ENCODE measurements at regions of chr13 and their contacts with region 1.

Region 1: GRCh38 chr13:49996951-49997895 is at the start of gene TRIM13:
- DNase-seq: peak; percentile 53 to 89
- H3K4me3 ChIP-seq: peak within 1 kb of the TSS; percentile 89 to 95 (median 92)
- H3K27ac ChIP-seq: peak within 1 kb of the TSS; percentile 95
- H3K4me1 ChIP-seq: peaks cover 2 to 6% (median 5%) of the 10 kb centered on the region in 4 experiments; a peak in 4 of 7 replicates
- H3K27me3 ChIP-seq: peaks cover 0 to 2% (median 0%) of the 10 kb centered on the region in 4 experiments; a peak in 2 of 7 replicates
- CTCF ChIP-seq: peak; percentile 62 to 83 (median 65)
- EP300 ChIP-seq: no peak
- POLR2A ChIP-seq: peak; percentile 81 to 89
- RAD21 ChIP-seq: peak; percentile 48 to 67
- total RNA-seq, gene TRIM13: 31.5 and 34.9 TPM in 2 replicates

Region 2: GRCh38 chr13:49976314-49977258 is 20.6 kb before region 1 on chr13:
- CTCF ChIA-PET with region 1: interaction called, 72 read pairs
- POLR2A ChIA-PET with region 1: interaction called, 6 read pairs
- DNase-seq: peak in 1 of 2 experiments; percentile 75
- H3K4me3 ChIP-seq: no peak overlapping the region
- H3K27ac ChIP-seq: no peak overlapping the region
- H3K4me1 ChIP-seq: no peaks in the 10 kb centered on the region
- H3K27me3 ChIP-seq: no peaks in the 10 kb centered on the region
- CTCF ChIP-seq: peak; percentile 19 to 96 (median 82)
- EP300 ChIP-seq: no peak
- POLR2A ChIP-seq: no peak
- RAD21 ChIP-seq: peak; percentile 97 to 98

Region 3: GRCh38 chr13:50026788-50027473 is 29.7 kb after region 1 on chr13:
- CTCF ChIA-PET with region 1: interaction called, 7 read pairs
- POLR2A ChIA-PET with region 1: interaction called, 13 read pairs
- DNase-seq: no peak
- H3K4me3 ChIP-seq: no peak overlapping the region
- H3K27ac ChIP-seq: no peak overlapping the region
- H3K4me1 ChIP-seq: no peaks in the 10 kb centered on the region
- H3K27me3 ChIP-seq: no peaks in the 10 kb centered on the region
- CTCF ChIP-seq: no peak
- EP300 ChIP-seq: no peak
- POLR2A ChIP-seq: no peak
- RAD21 ChIP-seq: no peak

Region 4: GRCh38 chr13:50123862-50124536 is 126.8 kb after region 1 on chr13:
- CTCF ChIA-PET with region 1: interaction called, 8 read pairs
- POLR2A ChIA-PET with region 1: interaction called, 52 read pairs
- DNase-seq: peak; percentile 78 to 87
- H3K4me3 ChIP-seq: peak overlapping the region; percentile 70 to 85 (median 72)
- H3K27ac ChIP-seq: no peak overlapping the region
- H3K4me1 ChIP-seq: peaks cover 5 to 30% (median 23%) of the 10 kb centered on the region in 4 experiments
- H3K27me3 ChIP-seq: peaks cover 38 to 66% (median 63%) of the 10 kb centered on the region in 4 experiments
- CTCF ChIP-seq: no peak
- EP300 ChIP-seq: 0 out of 3 replicates have a peak, but pooled peaks of 1 of the 2 experiments have one; percentile 12
- POLR2A ChIP-seq: no peak
- RAD21 ChIP-seq: no peak

Measured in H1 (cell line).